Activated T-helper 2 cell treated with anti-CD3 and anti-CD28 coated beads, Interferon-gamma antibody, Interleukin-2, Interleukin-4, amounts not matched to agents 10 μg/mL and 5 μg/mL and 100 μg/mL, durations not matched to agents 14 hours and 24 hours and 36 hours (primary cell): ENCODE measurements at regions of chr3 and their contacts with region 1.

Region 1: DNA sequence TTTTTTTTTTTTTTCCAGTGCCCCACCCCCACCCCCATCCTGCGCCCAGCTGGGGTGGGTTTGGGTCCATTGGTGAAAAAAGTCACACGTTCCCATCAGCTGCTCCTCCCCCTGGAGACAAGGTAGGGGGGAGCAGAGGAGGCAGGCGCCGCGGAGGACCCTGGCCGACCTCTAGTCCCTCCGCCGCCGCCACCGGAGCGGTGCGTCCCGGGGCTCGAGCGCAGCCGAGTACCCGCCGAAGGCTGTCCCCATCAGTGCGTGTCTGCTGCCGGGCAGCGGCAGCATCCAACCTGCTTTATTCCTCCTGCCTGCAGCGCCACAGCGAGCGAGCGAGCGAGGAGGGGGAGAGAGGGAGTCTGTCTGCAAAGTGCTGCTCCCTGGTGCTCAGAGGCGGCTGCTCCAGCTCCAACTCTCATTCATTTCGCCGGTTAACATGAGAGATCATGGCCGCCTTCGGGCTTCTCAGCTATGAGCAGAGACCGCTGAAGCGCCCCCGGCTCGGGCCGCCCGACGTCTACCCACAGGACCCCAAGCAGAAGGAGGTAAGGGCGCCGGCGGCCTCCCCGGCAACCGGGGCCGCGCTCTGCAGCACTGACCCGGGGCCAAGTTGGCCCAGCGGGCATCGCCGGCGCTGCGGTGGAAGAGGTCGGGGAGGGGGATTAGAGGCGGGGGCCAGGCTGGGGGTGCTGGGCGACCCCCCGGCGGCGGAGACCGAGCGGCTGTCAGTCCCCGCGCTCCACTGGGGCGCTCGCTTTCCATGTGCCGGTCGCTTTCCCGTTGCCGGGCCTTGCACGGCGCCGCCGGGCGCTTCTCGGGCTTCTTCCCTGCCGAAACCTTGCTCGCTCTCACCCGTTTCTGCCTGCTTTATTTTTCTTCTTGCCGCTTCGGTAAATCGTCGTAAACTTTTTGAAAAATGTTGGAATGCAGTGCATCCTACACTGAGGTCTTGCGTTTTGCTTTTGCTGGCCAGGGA is 1.3 kb downstream of the MED12L start:
- DNase-seq: peak; percentile 67
- H3K4me3 Mint-ChIP-seq: peak overlapping the region; percentile 86
- H3K27ac Mint-ChIP-seq: peak overlapping the region; percentile 46
- H3K4me1 Mint-ChIP-seq: peaks cover 11% of the 10 kb centered on the region
- H3K27me3 Mint-ChIP-seq: peaks cover 52% of the 10 kb centered on the region

Region 2: GRCh38 chr3:150546226-150547044 is 540.3 kb before region 1 on chr3 and contains the starts of genes EIF2A and SERP1:
- intact Hi-C with region 1: loop called (anchors 5 kb)
- DNase-seq: peak; percentile 100
- H3K4me3 Mint-ChIP-seq: peak within 1 kb of the TSS; percentile 97
- H3K27ac Mint-ChIP-seq: peak within 1 kb of the TSS; percentile 92
- H3K4me1 Mint-ChIP-seq: peaks cover 56% of the 10 kb centered on the region
- H3K27me3 Mint-ChIP-seq: no peaks in the 10 kb centered on the region
- total RNA-seq, gene EIF2A: 124 and 126 TPM in 2 replicates
- total RNA-seq, gene SERP1: 89.2 and 91.7 TPM in 2 replicates

Region 3: GRCh38 chr3:150787741-150788370 is 298.9 kb before region 1 on chr3:
- intact Hi-C with region 1: loop called (anchors 5 kb)
- DNase-seq: peak; percentile 59
- H3K4me3 Mint-ChIP-seq: no peak overlapping the region
- H3K27ac Mint-ChIP-seq: no peak overlapping the region
- H3K4me1 Mint-ChIP-seq: peaks cover 41% of the 10 kb centered on the region
- H3K27me3 Mint-ChIP-seq: peaks cover 2% of the 10 kb centered on the region

Region 4: GRCh38 chr3:150925751-150926201 is 161.0 kb before region 1 on chr3:
- intact Hi-C with region 1: loop called (anchors 5 kb)
- DNase-seq: peak; percentile 41
- H3K4me3 Mint-ChIP-seq: peak overlapping the region; percentile 45
- H3K27ac Mint-ChIP-seq: no peak overlapping the region
- H3K4me1 Mint-ChIP-seq: no peaks in the 10 kb centered on the region
- H3K27me3 Mint-ChIP-seq: peaks cover 9% of the 10 kb centered on the region

Region 5: DNA sequence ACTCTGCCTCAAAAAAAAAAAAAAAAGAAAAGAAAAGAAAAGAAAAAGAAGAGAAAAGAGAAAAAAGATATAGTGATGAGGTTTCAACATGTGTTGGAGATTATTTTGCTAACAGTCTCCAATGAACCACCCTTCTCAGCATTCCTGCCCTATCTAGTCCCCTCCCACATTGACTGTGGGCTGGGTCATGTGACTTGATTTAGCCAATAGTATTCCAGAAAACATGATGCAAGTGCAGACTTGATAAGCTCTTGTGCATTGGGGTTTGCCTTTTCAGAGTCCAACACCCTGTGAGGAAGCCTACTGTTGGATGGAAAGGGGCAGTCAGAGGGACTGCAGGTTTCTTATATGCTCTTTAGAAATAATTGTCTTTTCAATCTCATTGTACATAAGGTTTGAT is 39.1 kb before region 1 on chr3:
- intact Hi-C with region 1: no loop called
- DNase-seq: no peak
- H3K4me3 Mint-ChIP-seq: no peak overlapping the region
- H3K27ac Mint-ChIP-seq: no peak overlapping the region
- H3K4me1 Mint-ChIP-seq: no peaks in the 10 kb centered on the region
- H3K27me3 Mint-ChIP-seq: peaks cover 27% of the 10 kb centered on the region

Region 6: DNA sequence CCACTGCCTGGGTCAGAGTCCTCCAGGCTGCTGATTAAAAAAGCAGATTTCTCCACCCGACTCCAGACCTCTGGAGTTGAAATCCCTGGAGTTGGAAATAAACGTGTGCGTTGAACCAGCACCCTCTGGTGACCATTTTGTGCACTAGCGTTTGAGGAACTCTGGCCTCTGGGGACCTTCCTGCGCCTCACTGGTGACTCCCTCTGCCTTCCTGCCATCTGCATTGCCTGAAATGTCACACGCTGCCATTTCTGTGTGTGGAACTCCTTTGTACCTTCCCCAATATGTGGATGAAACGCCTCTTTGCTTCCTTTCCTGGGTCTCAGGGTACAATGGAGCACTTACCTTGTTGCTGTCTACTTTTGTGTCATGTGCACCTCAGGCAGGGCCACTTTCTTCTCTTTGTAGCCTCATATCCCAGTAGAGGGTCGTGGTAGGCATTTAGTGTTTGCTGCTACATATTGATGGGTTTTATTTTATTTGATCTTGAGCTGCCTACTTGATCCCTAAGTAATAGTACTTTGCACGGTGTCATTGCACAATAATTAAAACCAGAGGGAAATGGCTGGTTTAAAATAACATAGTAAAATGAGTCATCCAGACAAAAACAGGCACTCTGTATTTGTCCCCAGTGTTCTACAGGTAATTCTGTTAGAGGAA is 59.4 kb after region 1 on chr3:
- intact Hi-C with region 1: loop called (anchors 1 kb)
- DNase-seq: peak; percentile 37
- H3K4me3 Mint-ChIP-seq: no peak overlapping the region
- H3K27ac Mint-ChIP-seq: no peak overlapping the region
- H3K4me1 Mint-ChIP-seq: peaks cover 8% of the 10 kb centered on the region
- H3K27me3 Mint-ChIP-seq: peaks cover 3% of the 10 kb centered on the region

Region 7: DNA sequence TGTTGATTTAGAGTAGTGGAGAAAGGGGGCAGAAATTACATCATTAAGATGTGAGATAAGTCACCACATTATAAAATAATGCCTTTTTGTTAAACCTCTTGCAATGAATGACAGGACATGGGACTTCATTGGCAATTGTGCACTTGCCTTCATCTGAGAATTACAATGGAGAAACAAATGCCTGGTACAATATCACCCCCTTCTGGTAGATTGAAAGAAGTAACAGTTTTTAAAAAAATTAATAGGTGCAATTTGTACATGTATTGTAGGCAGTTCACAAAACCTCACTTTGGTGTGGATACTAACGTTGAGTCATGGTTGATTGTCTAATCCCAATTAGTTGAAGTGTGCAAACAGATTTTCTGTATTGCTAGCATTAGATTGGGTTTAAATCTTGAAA is 196.2 kb after region 1 on chr3:
- intact Hi-C with region 1: loop called (anchors 10 kb)
- DNase-seq: no peak
- H3K4me3 Mint-ChIP-seq: no peak overlapping the region
- H3K27ac Mint-ChIP-seq: peak overlapping the region; percentile 19
- H3K4me1 Mint-ChIP-seq: peaks cover 47% of the 10 kb centered on the region
- H3K27me3 Mint-ChIP-seq: no peaks in the 10 kb centered on the region

Region 8: GRCh38 chr3:151350656-151351618 is 264.2 kb after region 1 on chr3:
- intact Hi-C with region 1: no loop called
- DNase-seq: no peak
- H3K4me3 Mint-ChIP-seq: no peak overlapping the region
- H3K27ac Mint-ChIP-seq: no peak overlapping the region
- H3K4me1 Mint-ChIP-seq: peaks cover 27% of the 10 kb centered on the region
- H3K27me3 Mint-ChIP-seq: peaks cover 19% of the 10 kb centered on the region